AG04449 (cell line): ENCODE measurements at regions of chr2 and their contacts with region 1.

Region 1: GRCh38 chr2:150120326-150120955 is 367.0 kb downstream of the RND3 start:
- DNase-seq: no peak
- H3K4me3 ChIP-seq: no peak overlapping the region
- CTCF ChIP-seq: no peak

Region 2: GRCh38 chr2:150109912-150110311 is 10.5 kb before region 1 on chr2:
- CTCF ChIA-PET with region 1: interaction called, 15 read pairs
- POLR2A ChIA-PET with region 1: no interaction called
- DNase-seq: no peak
- H3K4me3 ChIP-seq: no peak overlapping the region
- CTCF ChIP-seq: no peak